Calu3 (cell line): ENCODE measurements at regions of chr2 and their contacts with region 1.

Region 1: GRCh38 chr2:216698895-216699294 is 3.5 kb upstream of the IGFBP5 start:
- DNase-seq: peak; percentile 41
- H3K4me3 Mint-ChIP-seq: no peak overlapping the region
- H3K27ac Mint-ChIP-seq: no peak overlapping the region
- H3K4me1 Mint-ChIP-seq: peaks cover 39% of the 10 kb centered on the region
- H3K27me3 Mint-ChIP-seq: no peaks in the 10 kb centered on the region
- CTCF ChIP-seq: peak; percentile 72

Region 2: GRCh38 chr2:216551234-216551633 is 147.7 kb before region 1 on chr2:
- CTCF ChIA-PET with region 1: no interaction called
- intact Hi-C with region 1: no loop called
- DNase-seq: no peak
- H3K4me3 Mint-ChIP-seq: no peak overlapping the region
- H3K27ac Mint-ChIP-seq: no peak overlapping the region
- H3K4me1 Mint-ChIP-seq: no peaks in the 10 kb centered on the region
- H3K27me3 Mint-ChIP-seq: peaks cover 14% of the 10 kb centered on the region
- CTCF ChIP-seq: no peak

Region 3: DNA sequence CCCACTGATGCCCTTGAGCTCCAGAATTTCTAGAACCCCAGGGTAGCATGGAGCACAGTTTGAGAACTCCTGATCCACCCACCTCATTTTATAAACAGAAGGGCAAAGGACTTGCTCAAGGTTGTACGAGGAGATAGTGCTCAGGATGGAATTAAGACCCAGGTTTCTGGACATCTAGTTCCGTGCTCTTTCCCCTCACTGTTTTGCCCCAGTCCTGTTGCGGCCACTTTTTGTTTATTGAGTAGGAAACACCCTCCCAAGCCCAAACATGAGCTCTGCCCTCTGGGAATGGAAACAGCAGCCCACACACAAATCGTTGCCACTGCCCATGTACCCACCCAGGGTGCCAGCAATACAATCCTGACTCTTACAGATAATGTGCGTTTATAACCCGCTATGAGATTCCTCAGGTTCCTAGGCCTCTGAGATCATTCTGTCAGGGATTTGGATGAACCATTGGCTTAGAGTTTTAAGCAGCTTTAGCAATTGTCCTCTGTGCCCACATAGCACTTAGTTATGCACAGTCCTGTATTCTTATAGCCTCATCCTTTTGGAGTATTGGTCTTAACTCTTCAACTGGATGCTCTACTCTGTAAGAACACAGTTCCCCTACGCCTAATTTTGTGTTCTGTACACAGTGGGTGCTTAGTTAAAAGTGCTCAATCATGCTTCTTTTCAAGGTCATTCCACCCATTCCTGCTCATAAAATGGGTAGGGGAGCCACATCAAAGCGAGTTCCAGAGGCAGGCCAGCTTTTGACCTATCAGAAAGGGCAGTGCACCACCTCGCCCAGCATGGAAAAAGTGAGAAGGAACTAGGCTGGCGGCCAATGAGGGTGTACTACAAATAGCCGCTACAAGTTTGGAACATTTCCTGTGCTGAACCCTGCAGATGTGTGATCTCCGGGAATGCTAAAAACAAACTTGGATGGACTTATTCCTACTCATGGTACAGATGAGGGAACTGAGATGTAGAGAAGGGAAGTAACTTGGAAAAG is 126.0 kb before region 1 on chr2:
- CTCF ChIA-PET with region 1: no interaction called
- intact Hi-C with region 1: no loop called
- DNase-seq: no peak
- H3K4me3 Mint-ChIP-seq: no peak overlapping the region
- H3K27ac Mint-ChIP-seq: no peak overlapping the region
- H3K4me1 Mint-ChIP-seq: peaks cover 8% of the 10 kb centered on the region
- H3K27me3 Mint-ChIP-seq: no peaks in the 10 kb centered on the region
- CTCF ChIP-seq: no peak

Region 4: DNA sequence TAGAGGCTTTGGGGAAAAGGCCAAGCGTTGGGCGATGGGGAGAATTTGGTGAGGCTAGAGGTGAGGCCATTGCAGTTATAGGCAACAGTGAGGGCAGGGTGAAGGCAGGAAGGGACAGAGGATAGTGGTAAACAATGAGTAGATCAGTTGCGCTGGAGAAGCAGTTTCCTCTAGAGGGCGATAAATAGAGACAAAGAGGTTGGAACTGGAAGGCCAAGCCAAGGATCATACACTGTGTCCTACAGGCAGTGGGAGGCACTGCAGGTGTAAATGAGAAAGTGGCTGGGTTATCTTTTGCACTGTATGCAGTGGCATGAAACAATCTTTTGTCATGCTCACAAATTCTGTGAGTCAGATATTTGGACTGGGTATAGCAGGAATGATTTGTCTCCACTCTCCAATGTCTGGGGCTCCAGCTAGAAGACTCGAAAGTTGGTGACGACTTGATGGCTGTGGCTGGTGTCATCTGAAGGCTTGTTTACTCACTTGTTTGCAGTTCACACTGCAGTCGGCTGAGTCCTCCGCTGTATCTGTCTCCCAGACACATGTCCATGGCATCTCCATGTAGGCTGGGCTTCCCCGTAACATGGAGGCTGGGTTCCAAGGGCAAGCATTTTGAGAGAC is 78.9 kb after region 1 on chr2:
- CTCF ChIA-PET with region 1: no interaction called
- intact Hi-C with region 1: loop called (anchors 2 kb)
- DNase-seq: peak; percentile 53
- H3K4me3 Mint-ChIP-seq: no peak overlapping the region
- H3K27ac Mint-ChIP-seq: no peak overlapping the region
- H3K4me1 Mint-ChIP-seq: no peaks in the 10 kb centered on the region
- H3K27me3 Mint-ChIP-seq: no peaks in the 10 kb centered on the region
- CTCF ChIP-seq: peak; percentile 72

Region 5: GRCh38 chr2:217105733-217106649 is 407.1 kb after region 1 on chr2:
- CTCF ChIA-PET with region 1: no interaction called
- intact Hi-C with region 1: loop called (anchors 10 kb)
- DNase-seq: peak; percentile 66
- H3K4me3 Mint-ChIP-seq: no peak overlapping the region
- H3K27ac Mint-ChIP-seq: peak overlapping the region; percentile 90
- H3K4me1 Mint-ChIP-seq: peaks cover 65% of the 10 kb centered on the region
- H3K27me3 Mint-ChIP-seq: no peaks in the 10 kb centered on the region
- CTCF ChIP-seq: no peak

Region 6: GRCh38 chr2:217231212-217231611 is 532.3 kb after region 1 on chr2:
- CTCF ChIA-PET with region 1: no interaction called
- intact Hi-C with region 1: loop called (anchors 5 kb)
- DNase-seq: no peak
- H3K4me3 Mint-ChIP-seq: no peak overlapping the region
- H3K27ac Mint-ChIP-seq: peak overlapping the region; percentile 90
- H3K4me1 Mint-ChIP-seq: peaks cover 56% of the 10 kb centered on the region
- H3K27me3 Mint-ChIP-seq: no peaks in the 10 kb centered on the region
- CTCF ChIP-seq: no peak

Region 7: GRCh38 chr2:217510771-217511291 is 811.9 kb after region 1 on chr2:
- CTCF ChIA-PET with region 1: interaction called, 4 read pairs
- intact Hi-C with region 1: loop called (anchors 1 kb)
- DNase-seq: peak; percentile 76
- H3K4me3 Mint-ChIP-seq: no peak overlapping the region
- H3K27ac Mint-ChIP-seq: peak overlapping the region; percentile 90
- H3K4me1 Mint-ChIP-seq: peaks cover 39% of the 10 kb centered on the region
- H3K27me3 Mint-ChIP-seq: no peaks in the 10 kb centered on the region
- CTCF ChIP-seq: peak; percentile 79

Region 8: GRCh38 chr2:217713395-217714286 is 1014.7 kb after region 1 on chr2:
- CTCF ChIA-PET with region 1: interaction called, 7 read pairs
- intact Hi-C with region 1: loop called (anchors 5 kb)
- DNase-seq: peak; percentile 92
- H3K4me3 Mint-ChIP-seq: peak overlapping the region; percentile 14
- H3K27ac Mint-ChIP-seq: peak overlapping the region; percentile 85
- H3K4me1 Mint-ChIP-seq: peaks cover 31% of the 10 kb centered on the region
- H3K27me3 Mint-ChIP-seq: no peaks in the 10 kb centered on the region
- CTCF ChIP-seq: peak; percentile 97